ENCODE measurements at regions of chr3 and their contacts with region 1.

Region 1: GRCh38 chr3:113287803-113288648 is 76.7 kb downstream of the BOC start:
- DNase-seq: peak; percentile 67
- CTCF ChIP-seq: peak; percentile 89

Region 2: GRCh38 chr3:113043686-113044085 is 244.3 kb before region 1 on chr3:
- in situ Hi-C with region 1: no loop called
- DNase-seq: no peak
- CTCF ChIP-seq: no peak

Region 3: GRCh38 chr3:113136071-113136470 is 152.0 kb before region 1 on chr3:
- in situ Hi-C with region 1: loop called (anchors 10 kb)
- DNase-seq: no peak
- CTCF ChIP-seq: peak; percentile 12

Measured in GM13976 (cell line).